GM10248 (cell line): ENCODE measurements at regions of chr11 and their contacts with region 1.

Region 1: DNA sequence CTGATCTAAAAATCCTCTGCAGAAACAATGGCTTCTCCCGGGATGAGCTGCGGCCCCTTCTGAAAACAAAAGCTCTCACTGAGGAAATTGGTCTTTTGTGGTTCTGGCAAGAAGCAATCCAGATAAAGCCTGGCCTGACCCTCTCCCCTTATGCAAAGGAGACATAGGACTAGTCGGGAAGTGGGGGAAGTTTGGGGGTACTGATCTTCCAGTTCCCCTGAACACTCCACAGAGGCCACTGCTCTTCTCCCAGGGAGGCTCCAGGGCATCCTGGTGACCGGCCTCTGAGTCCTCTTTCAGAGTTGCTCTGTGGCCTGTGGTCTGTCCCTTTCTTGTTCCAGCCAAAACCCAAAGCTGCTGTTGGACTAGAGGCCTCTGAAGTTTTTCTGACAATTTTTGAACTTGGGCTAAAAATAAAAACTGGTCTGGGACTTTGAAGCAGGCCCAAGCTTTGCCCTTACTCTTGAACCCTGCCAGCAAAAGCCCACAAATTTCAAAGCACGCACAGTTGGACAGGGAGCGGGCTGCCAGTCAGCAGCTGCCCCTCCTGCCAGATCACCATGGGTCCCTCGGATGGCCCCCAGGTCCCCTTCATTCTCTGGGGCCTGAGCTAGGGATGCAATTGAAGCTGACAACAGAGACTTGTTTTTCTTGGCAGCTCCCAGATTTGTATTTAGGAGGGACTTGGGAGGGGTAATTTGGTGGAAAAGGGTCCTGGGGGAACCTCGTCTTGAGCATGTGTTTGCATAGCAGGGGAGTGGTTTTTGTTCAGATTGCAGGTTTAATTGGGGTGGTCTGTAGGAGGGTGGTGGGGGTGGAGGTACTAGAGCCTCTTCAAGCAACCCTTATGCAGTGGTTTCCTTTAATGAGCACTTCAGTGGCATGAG is 381.6 kb upstream of the CADM1 start:
- DNase-seq: no peak
- CTCF ChIP-seq: no peak

Region 2: GRCh38 chr11:115869780-115870431 is 15.9 kb before region 1 on chr11:
- CTCF ChIA-PET with region 1: interaction called, 10 read pairs
- POLR2A ChIA-PET with region 1: no interaction called
- DNase-seq: peak; percentile 71
- CTCF ChIP-seq: peak; percentile 72

Region 3: DNA sequence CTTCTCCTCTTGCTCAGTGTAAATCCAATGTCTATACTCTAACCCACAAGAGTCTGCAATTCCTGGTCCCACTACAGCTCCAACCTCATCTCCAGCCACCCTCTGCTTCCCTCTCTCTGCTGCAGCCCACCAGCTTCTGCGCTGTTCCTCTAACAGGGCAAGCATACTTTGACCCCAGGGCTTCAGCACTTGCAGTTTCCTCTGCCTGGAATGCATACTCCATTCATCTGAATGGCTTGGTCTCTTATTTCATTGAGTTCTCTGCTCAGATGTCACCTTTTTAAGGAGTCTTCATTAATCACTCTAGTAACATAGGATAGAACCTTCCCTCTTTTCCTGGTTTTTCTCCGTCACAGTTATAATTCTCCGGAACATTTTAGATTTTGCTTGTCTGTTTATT is 745.4 kb after region 1 on chr11:
- CTCF ChIA-PET with region 1: no interaction called
- POLR2A ChIA-PET with region 1: no interaction called
- DNase-seq: no peak
- CTCF ChIP-seq: no peak